Heart right ventricle (tissue), 16 donors: ENCODE measurements at regions of chr6 and their contacts with region 1.

Region 1: DNA sequence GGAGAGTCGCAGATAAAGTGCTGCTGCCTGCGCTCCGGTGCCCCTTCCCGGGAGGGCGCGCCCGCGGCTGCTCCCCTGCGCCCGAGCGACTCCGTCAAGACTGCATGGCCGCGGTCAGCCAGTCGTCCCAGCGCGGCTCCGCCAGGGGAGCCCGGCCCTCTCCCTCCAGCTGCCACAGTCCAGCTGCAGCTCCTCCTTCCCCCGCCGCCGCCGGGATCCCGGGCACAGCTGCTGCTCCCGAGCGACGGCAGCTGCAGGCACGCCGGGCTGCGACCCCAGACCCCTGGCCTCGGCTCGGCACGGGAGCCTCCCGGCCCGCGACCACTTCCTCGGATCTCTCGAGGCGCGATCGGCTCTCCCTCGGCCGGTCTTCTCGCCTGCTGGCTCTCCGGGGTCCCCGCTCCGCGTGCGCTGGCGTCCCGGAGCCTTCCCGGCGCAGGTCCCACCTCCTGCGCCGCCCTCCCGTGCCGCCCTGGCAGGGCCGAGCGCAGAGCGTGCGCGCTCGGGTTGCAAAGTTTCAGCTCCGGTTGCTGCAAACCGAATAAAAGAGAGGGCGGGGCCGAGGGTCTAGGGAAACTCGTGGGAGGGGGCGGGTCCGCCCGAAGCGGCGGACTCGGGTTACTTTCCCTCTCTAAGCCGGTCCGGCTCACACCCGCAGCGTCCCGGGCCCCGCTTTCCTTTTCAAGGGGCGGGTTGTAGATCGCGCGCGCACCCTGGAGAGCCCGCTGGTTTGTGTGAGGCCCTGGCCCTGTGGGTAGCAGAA is at the start of gene CNKSR3:
- DNase-seq: peak; percentile 84 to 89
- ATAC-seq: peak; percentile 88 to 95 (median 92)
- H3K4me3 ChIP-seq: peak within 1 kb of the TSS; percentile 64 to 94 (median 84)
- H3K27ac ChIP-seq: peak within 1 kb of the TSS; percentile 78 to 96 (median 92)
- H3K4me1 ChIP-seq: peaks cover 3 to 61% (median 27%) of the 10 kb centered on the region in 9 donors
- H3K27me3 ChIP-seq: peaks cover 0 to 28% (median 0%) of the 10 kb centered on the region in 7 donors
- CTCF ChIP-seq: peak in 4 of 9 donors; percentile 5 to 19 (median 12)
- total RNA-seq, gene CNKSR3: 12.9 to 42.2 (median 27.8) TPM

Region 2: GRCh38 chr6:154410619-154411072 is 99.7 kb before region 1 on chr6:
- intact Hi-C with region 1: loop called in 3 of 10 experiments (anchors 5 kb)
- DNase-seq: peak in 1 of 2 donors; percentile 60
- ATAC-seq: peak; percentile 85 to 96 (median 92)
- H3K4me3 ChIP-seq: no peak overlapping the region
- H3K27ac ChIP-seq: peak overlapping the region in 9 of 10 donors; percentile 61 to 92 (median 88)
- H3K4me1 ChIP-seq: peaks cover 7 to 45% (median 26%) of the 10 kb centered on the region in 9 donors
- H3K27me3 ChIP-seq: no peaks in the 10 kb centered on the region
- CTCF ChIP-seq: no peak

Region 3: GRCh38 chr6:154450208-154450873 is 60.0 kb before region 1 on chr6:
- intact Hi-C with region 1: loop called in 1 of 10 experiments (anchors 5 kb)
- DNase-seq: no peak
- ATAC-seq: no peak
- H3K4me3 ChIP-seq: no peak overlapping the region
- H3K27ac ChIP-seq: no peak overlapping the region
- H3K4me1 ChIP-seq: peaks cover 4 to 64% (median 29%) of the 10 kb centered on the region in 9 donors
- H3K27me3 ChIP-seq: no peaks in the 10 kb centered on the region
- CTCF ChIP-seq: no peak

Region 4: GRCh38 chr6:154593122-154593521 is 82.8 kb after region 1 on chr6:
- intact Hi-C with region 1: loop called in 5 of 10 experiments (anchors 2 to 10 kb)
- DNase-seq: peak in 1 of 2 donors; percentile 73
- ATAC-seq: peak; percentile 79 to 93 (median 89)
- H3K4me3 ChIP-seq: peak overlapping the region in 1 of 10 donors; percentile 11
- H3K27ac ChIP-seq: peak overlapping the region; percentile 42 to 90 (median 83)
- H3K4me1 ChIP-seq: peaks cover 0 to 28% (median 11%) of the 10 kb centered on the region in 9 donors
- H3K27me3 ChIP-seq: no peaks in the 10 kb centered on the region
- CTCF ChIP-seq: no peak

Region 5: GRCh38 chr6:154615483-154616025 is 105.2 kb after region 1 on chr6:
- intact Hi-C with region 1: loop called in 1 of 10 experiments (anchors 5 kb)
- DNase-seq: peak; percentile 61 to 65
- ATAC-seq: peak; percentile 71 to 90 (median 84)
- H3K4me3 ChIP-seq: peak overlapping the region in 1 of 10 donors; percentile 10
- H3K27ac ChIP-seq: no peak overlapping the region
- H3K4me1 ChIP-seq: peaks cover 0 to 18% (median 4%) of the 10 kb centered on the region in 9 donors
- H3K27me3 ChIP-seq: no peaks in the 10 kb centered on the region
- CTCF ChIP-seq: peak in 5 of 9 donors; percentile 13 to 46 (median 42)

Region 6: GRCh38 chr6:154733012-154733625 is 222.8 kb after region 1 on chr6 and contains the start of gene SCAF8:
- intact Hi-C with region 1: loop called in 1 of 10 experiments (anchors 10 kb)
- DNase-seq: peak; percentile 79 to 85
- ATAC-seq: peak; percentile 75 to 94 (median 90)
- H3K4me3 ChIP-seq: peak within 1 kb of the TSS; percentile 93 to 99 (median 98)
- H3K27ac ChIP-seq: peak within 1 kb of the TSS; percentile 99 to 100 (median 100)
- H3K4me1 ChIP-seq: peaks cover 5 to 50% (median 46%) of the 10 kb centered on the region in 9 donors
- H3K27me3 ChIP-seq: no peaks in the 10 kb centered on the region
- CTCF ChIP-seq: peak; percentile 69 to 95 (median 86)
- total RNA-seq, gene SCAF8: 43.0 to 96.1 (median 73.6) TPM